ENCODE measurements at regions of chr5 and their contacts with region 1.

Region 1: GRCh38 chr5:157718519-157718918 is 12.7 kb upstream of the THG1L start:
- DNase-seq: peak; percentile 61
- H3K4me3 ChIP-seq: no peak overlapping the region; a peak in 1 of 4 replicates
- H3K27ac ChIP-seq: peak overlapping the region in 1 of 2 experiments; percentile 51; a peak in 1 of 4 replicates
- H3K4me1 ChIP-seq: no peaks in the 10 kb centered on the region; a peak in 1 of 4 replicates
- H3K27me3 ChIP-seq: no peaks in the 10 kb centered on the region
- CTCF ChIP-seq: peak; percentile 72
- EP300 ChIP-seq: no peak
- RAD21 ChIP-seq: peak; percentile 87

Region 2: GRCh38 chr5:157431544-157432200 is 286.8 kb before region 1 on chr5:
- CTCF ChIA-PET with region 1: interaction called, 15 read pairs
- POLR2A ChIA-PET with region 1: no interaction called
- DNase-seq: no peak
- H3K4me3 ChIP-seq: no peak overlapping the region; a peak in 1 of 4 replicates
- H3K27ac ChIP-seq: no peak overlapping the region
- H3K4me1 ChIP-seq: no peaks in the 10 kb centered on the region
- H3K27me3 ChIP-seq: no peaks in the 10 kb centered on the region
- CTCF ChIP-seq: peak; percentile 62
- EP300 ChIP-seq: no peak
- RAD21 ChIP-seq: peak; percentile 78

Region 3: DNA sequence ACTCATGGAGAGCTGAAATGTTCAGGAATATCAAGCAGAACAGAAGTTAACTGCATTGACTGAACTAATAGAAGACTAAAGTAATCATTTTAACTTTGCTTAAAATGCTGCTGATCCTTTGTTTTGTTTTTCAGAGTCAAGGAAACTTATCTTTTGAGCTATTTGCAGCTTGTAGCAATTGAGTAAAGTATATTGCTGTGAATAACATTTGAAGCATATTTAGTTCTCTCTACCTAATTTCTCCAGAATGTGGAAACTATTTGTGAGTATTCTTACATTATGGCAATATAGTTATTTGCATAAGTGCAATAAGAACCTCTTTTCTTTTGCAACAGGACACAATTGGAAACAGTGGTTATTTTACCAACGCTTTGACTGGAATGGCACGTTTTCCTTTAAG is 61.0 kb before region 1 on chr5:
- CTCF ChIA-PET with region 1: no interaction called
- POLR2A ChIA-PET with region 1: no interaction called
- DNase-seq: no peak
- H3K4me3 ChIP-seq: no peak overlapping the region
- H3K27ac ChIP-seq: no peak overlapping the region
- H3K4me1 ChIP-seq: no peaks in the 10 kb centered on the region
- H3K27me3 ChIP-seq: no peaks in the 10 kb centered on the region
- CTCF ChIP-seq: no peak
- EP300 ChIP-seq: no peak
- RAD21 ChIP-seq: no peak

Region 4: DNA sequence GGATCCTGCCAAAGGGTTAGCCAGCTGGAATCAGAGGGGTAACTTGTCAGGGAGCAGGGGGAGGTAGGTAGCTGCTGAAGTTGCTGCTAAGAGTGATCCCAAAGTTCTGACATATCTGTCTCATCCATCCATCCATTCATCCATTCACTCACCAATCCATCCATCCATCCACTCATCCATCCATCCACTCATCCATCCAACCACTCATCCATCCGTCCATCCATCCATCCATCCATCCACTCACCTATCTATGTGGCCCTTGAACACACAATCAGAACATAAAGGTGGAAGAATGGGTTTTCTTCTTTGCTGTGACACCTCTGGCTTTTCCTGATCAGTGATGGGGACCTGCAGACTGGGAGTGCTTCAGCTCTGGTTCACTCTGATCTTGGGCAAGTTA is 50.2 kb before region 1 on chr5:
- CTCF ChIA-PET with region 1: interaction called, 10 read pairs
- POLR2A ChIA-PET with region 1: no interaction called
- DNase-seq: no peak
- H3K4me3 ChIP-seq: no peak overlapping the region
- H3K27ac ChIP-seq: no peak overlapping the region
- H3K4me1 ChIP-seq: no peaks in the 10 kb centered on the region
- H3K27me3 ChIP-seq: no peaks in the 10 kb centered on the region
- CTCF ChIP-seq: no peak
- EP300 ChIP-seq: no peak
- RAD21 ChIP-seq: no peak

Region 5: GRCh38 chr5:157731272-157732129 is 13.0 kb after region 1 on chr5 and contains the start of gene THG1L:
- CTCF ChIA-PET with region 1: interaction called, 15 read pairs
- POLR2A ChIA-PET with region 1: interaction called, 4 read pairs
- DNase-seq: peak; percentile 91
- H3K4me3 ChIP-seq: peak within 1 kb of the TSS; percentile 84 to 93
- H3K27ac ChIP-seq: peak within 1 kb of the TSS; percentile 96 to 99
- H3K4me1 ChIP-seq: peaks cover 0 to 10% of the 10 kb centered on the region in 2 experiments; a peak in 2 of 4 replicates
- H3K27me3 ChIP-seq: no peaks in the 10 kb centered on the region
- CTCF ChIP-seq: no peak
- EP300 ChIP-seq: no peak
- RAD21 ChIP-seq: no peak
- polyA plus RNA-seq, gene THG1L: 32.0 and 37.0 TPM in 2 replicates

Region 6: GRCh38 chr5:157743163-157744050 is 24.9 kb after region 1 on chr5 and contains the start of gene LSM11:
- CTCF ChIA-PET with region 1: interaction called, 14 read pairs
- POLR2A ChIA-PET with region 1: no interaction called
- DNase-seq: peak; percentile 98
- H3K4me3 ChIP-seq: peak within 1 kb of the TSS; percentile 76 to 83
- H3K27ac ChIP-seq: peak within 1 kb of the TSS in 1 of 2 experiments; percentile 56; a peak in 1 of 4 replicates
- H3K4me1 ChIP-seq: peaks cover 0 to 18% of the 10 kb centered on the region in 2 experiments; a peak in 2 of 4 replicates
- H3K27me3 ChIP-seq: no peaks in the 10 kb centered on the region
- CTCF ChIP-seq: peak; percentile 93
- EP300 ChIP-seq: no peak; a peak in 1 of 4 replicates
- RAD21 ChIP-seq: peak; percentile 79
- polyA plus RNA-seq, gene LSM11: 0.95 and 1.3 TPM in 2 replicates

Region 7: GRCh38 chr5:158194561-158194976 is 476.1 kb after region 1 on chr5:
- CTCF ChIA-PET with region 1: no interaction called
- POLR2A ChIA-PET with region 1: no interaction called
- DNase-seq: no peak
- H3K4me3 ChIP-seq: no peak overlapping the region
- H3K27ac ChIP-seq: no peak overlapping the region
- H3K4me1 ChIP-seq: no peaks in the 10 kb centered on the region
- H3K27me3 ChIP-seq: no peaks in the 10 kb centered on the region
- CTCF ChIP-seq: no peak
- EP300 ChIP-seq: no peak
- RAD21 ChIP-seq: no peak

Measured in SK-N-SH (cell line).